T-cell (primary cell): ENCODE measurements at regions of chr19 and their contacts with region 1.

Region 1: DNA sequence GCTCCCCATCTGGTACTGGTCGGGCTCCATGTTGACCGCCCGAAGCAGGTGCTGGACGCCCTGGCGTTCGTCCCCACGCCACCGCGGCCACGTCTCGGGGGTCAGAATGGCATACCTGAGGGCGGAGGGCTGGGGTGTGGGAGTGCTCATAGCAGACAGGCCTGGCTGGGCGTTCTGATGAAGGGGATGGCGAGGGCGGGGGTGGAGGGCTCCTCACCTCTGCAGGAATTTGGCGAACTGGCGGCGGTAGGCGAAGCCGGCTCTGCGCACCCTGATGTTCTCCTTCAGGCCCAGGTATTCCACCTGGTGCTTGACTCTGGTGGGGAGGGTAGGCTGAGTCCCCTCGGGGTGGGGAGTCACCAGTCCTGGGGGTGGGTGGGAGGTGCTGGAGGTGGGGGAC is 22.3 kb upstream of the ZNF414 start:
- DNase-seq: no peak
- ATAC-seq: no peak
- H3K4me3 ChIP-seq: no peak overlapping the region
- H3K4me3 Mint-ChIP-seq: no peak overlapping the region
- H3K27ac ChIP-seq: no peak overlapping the region
- H3K27ac Mint-ChIP-seq: peak overlapping the region in 1 of 2 donors; percentile 27
- H3K4me1 ChIP-seq: no peaks in the 10 kb centered on the region
- H3K4me1 Mint-ChIP-seq: peaks cover 0 to 4% (median 0%) of the 10 kb centered on the region in 3 donors
- H3K27me3 ChIP-seq: no peaks in the 10 kb centered on the region
- H3K27me3 Mint-ChIP-seq: no peaks in the 10 kb centered on the region

Region 2: DNA sequence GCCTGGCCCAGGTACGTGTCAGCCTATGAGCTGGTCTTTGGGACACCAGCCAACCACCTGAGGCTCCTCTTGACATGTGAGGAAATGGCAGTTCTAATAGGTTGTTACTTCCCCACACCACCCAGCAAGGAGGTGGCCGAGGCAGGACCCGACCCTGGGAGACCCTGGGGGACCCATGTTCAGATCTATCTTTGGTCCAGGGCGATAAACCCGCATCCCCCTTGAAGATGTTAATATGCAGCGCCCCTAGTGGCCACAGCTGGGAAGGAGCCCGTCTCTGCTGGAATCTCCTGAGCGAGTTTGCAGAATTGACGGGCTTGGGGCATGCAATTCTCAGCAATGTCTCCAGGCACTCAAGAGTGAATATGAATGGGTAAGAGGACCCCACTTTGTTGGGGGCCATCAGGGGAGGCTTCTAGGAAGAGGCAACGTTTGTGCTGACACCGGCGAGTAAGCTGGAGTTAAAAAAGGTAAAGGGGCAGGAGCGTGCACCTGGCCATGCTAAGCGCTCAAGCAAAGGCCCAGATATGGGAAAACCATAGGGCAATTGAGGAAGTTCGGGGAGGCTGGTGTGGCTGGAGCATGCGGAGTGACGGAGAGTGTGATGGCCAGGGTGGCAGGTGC is 42.5 kb after region 1 on chr19:
- CTCF ChIA-PET with region 1: no interaction called
- POLR2A ChIA-PET with region 1: no interaction called
- DNase-seq: peak; percentile 47 to 90 (median 77)
- ATAC-seq: peak; percentile 17 to 50 (median 32)
- H3K4me3 ChIP-seq: no peak overlapping the region
- H3K4me3 Mint-ChIP-seq: peak overlapping the region; percentile 61 to 88 (median 67)
- H3K27ac ChIP-seq: peak overlapping the region; percentile 9
- H3K27ac Mint-ChIP-seq: peak overlapping the region; percentile 77 to 81
- H3K4me1 ChIP-seq: peaks cover 20 to 74% of the 10 kb centered on the region in 2 experiments
- H3K4me1 Mint-ChIP-seq: peaks cover 52 to 61% (median 57%) of the 10 kb centered on the region in 3 donors
- H3K27me3 ChIP-seq: no peaks in the 10 kb centered on the region
- H3K27me3 Mint-ChIP-seq: no peaks in the 10 kb centered on the region

Region 3: GRCh38 chr19:8605514-8605913 is 69.2 kb after region 1 on chr19:
- CTCF ChIA-PET with region 1: no interaction called
- POLR2A ChIA-PET with region 1: interaction called in 1 of 2 experiments, 12 read pairs
- DNase-seq: no peak
- ATAC-seq: no peak
- H3K4me3 ChIP-seq: no peak overlapping the region
- H3K4me3 Mint-ChIP-seq: no peak overlapping the region
- H3K27ac ChIP-seq: no peak overlapping the region
- H3K27ac Mint-ChIP-seq: no peak overlapping the region
- H3K4me1 ChIP-seq: peaks cover 5 to 23% of the 10 kb centered on the region in 2 experiments
- H3K4me1 Mint-ChIP-seq: peaks cover 22 to 36% (median 29%) of the 10 kb centered on the region in 3 donors
- H3K27me3 ChIP-seq: peaks cover 0 to 16% of the 10 kb centered on the region in 2 experiments
- H3K27me3 Mint-ChIP-seq: peaks cover 0 to 4% of the 10 kb centered on the region in 2 donors